ENCODE measurements at regions of chr4 and their contacts with region 1.

Region 1: GRCh38 chr4:88366460-88366859 is 12.2 kb upstream of the HERC6 start:
- DNase-seq: no peak
- H3K4me3 ChIP-seq: no peak overlapping the region
- CTCF ChIP-seq: no peak

Region 2: DNA sequence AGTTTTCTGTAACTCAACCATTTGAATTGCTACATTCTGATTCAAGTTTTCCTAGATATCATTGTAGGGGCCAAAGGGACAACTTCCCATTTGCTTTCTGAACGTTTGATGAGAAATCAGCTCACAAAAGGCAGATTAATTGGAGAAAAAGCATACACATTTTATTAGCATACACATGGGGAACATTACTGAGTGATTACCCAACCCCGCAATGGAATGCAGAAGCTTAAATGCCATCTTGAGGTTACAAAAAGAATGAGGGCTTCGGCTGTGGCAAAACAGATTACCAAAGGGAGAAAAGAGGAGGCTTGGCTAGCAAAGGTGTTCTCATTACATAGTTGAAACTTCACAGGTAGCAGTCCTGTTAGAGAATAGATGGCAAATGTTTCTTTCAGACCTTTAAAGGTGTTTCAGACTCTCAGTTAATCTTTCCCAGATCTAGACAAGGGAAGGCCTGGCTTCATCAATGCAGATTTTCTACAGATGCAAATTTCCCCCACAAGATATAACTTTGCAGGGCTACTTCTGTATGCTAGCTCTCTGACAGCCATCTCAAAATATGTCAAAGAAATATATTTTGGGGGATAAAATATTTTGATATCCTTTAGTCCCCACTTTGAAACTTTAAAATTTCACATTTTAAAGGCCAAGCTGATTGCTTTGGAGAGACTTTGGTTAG is 14.3 kb before region 1 on chr4:
- CTCF ChIA-PET with region 1: interaction called, 24 read pairs
- POLR2A ChIA-PET with region 1: no interaction called
- DNase-seq: peak; percentile 41
- H3K4me3 ChIP-seq: no peak overlapping the region
- CTCF ChIP-seq: no peak

Region 3: GRCh38 chr4:88398381-88398780 is 31.9 kb after region 1 on chr4:
- CTCF ChIA-PET with region 1: no interaction called
- POLR2A ChIA-PET with region 1: no interaction called
- DNase-seq: no peak
- H3K4me3 ChIP-seq: no peak overlapping the region
- CTCF ChIP-seq: no peak

Region 4: GRCh38 chr4:88953400-88953799 is 586.9 kb after region 1 on chr4:
- CTCF ChIA-PET with region 1: no interaction called
- POLR2A ChIA-PET with region 1: no interaction called
- DNase-seq: no peak
- H3K4me3 ChIP-seq: no peak overlapping the region
- CTCF ChIP-seq: no peak